ENCODE measurements at regions of chr6 and their contacts with region 1.

Region 1: GRCh38 chr6:130697995-130698535 is 129.1 kb upstream of the SMLR1 start:
- DNase-seq: peak in 1 of 2 experiments; percentile 68
- H3K4me3 ChIP-seq: no peak overlapping the region
- H3K27ac ChIP-seq: no peak overlapping the region
- H3K4me1 ChIP-seq: no peaks in the 10 kb centered on the region
- H3K27me3 ChIP-seq: no peaks in the 10 kb centered on the region
- CTCF ChIP-seq: peak; percentile 33 to 79 (median 64)
- EP300 ChIP-seq: no peak
- POLR2A ChIP-seq: no peak
- RAD21 ChIP-seq: peak; percentile 87 to 88

Region 2: DNA sequence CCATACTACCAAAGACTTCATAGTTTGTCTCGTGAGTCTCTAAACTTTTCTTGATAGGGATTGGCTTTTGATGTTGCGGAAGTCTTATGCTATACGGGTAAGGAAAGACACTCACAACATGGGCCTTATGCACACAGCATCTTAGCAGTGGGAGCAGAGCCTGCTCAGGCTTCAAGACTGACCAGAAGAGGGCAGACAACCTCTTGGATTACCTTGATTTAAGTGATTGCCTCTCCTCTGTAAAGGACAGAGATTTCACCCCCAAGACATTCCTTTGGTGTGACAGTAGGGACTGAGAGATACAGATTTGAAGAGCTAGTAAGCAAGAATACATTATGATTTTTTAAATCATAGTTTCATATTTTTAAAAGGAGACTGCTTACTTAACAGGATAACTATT is 404.3 kb before region 1 on chr6:
- CTCF ChIA-PET with region 1: interaction called, 11 read pairs
- POLR2A ChIA-PET with region 1: no interaction called
- DNase-seq: peak in 1 of 2 experiments; percentile 25
- H3K4me3 ChIP-seq: no peak overlapping the region
- H3K27ac ChIP-seq: no peak overlapping the region
- H3K4me1 ChIP-seq: no peaks in the 10 kb centered on the region
- H3K27me3 ChIP-seq: no peaks in the 10 kb centered on the region
- CTCF ChIP-seq: peak; percentile 49 to 88 (median 69)
- EP300 ChIP-seq: no peak
- POLR2A ChIP-seq: no peak
- RAD21 ChIP-seq: peak; percentile 70 to 79

Region 3: GRCh38 chr6:130322673-130323268 is 375.3 kb before region 1 on chr6:
- CTCF ChIA-PET with region 1: interaction called, 20 read pairs
- POLR2A ChIA-PET with region 1: no interaction called
- DNase-seq: no peak
- H3K4me3 ChIP-seq: no peak overlapping the region
- H3K27ac ChIP-seq: no peak overlapping the region
- H3K4me1 ChIP-seq: no peaks in the 10 kb centered on the region
- H3K27me3 ChIP-seq: no peaks in the 10 kb centered on the region
- CTCF ChIP-seq: peak in 2 of 3 experiments; percentile 70 to 82; a peak in 3 of 4 replicates
- EP300 ChIP-seq: no peak
- POLR2A ChIP-seq: no peak
- RAD21 ChIP-seq: peak; percentile 90 to 92

Region 4: DNA sequence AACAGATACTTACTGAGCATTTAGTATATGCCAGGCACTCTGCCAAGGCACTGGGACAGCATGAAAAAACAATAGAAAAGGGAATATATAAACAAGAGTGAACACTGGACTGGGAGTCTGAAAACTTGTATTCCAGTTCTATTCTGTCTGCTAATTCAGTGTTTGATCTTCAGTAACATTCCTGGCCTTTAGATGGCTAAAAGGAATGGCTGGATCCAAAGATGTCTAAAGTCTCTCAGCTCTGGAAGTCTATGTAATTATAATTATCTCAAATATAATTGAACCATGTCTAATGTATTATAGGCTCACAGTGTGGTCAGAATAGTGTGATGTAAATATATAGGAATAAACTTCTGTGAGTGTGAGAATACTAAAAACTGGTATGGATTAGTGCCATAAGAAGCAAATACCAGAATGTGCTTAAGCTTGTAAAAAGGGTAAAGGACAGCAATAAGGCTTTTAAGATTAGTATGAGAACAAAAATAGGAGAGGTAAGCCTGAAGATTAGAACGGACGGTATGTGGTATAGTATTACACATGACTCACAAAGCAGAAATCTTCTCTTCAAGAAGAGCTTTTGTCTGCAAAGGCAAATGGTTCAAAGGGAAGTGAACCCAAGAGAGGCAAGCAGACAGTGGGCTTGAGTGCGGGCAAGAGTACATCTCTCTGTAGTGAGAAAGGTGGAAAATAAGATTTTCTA is 263.7 kb before region 1 on chr6:
- CTCF ChIA-PET with region 1: no interaction called
- POLR2A ChIA-PET with region 1: no interaction called
- DNase-seq: no peak
- H3K4me3 ChIP-seq: no peak overlapping the region
- H3K27ac ChIP-seq: no peak overlapping the region
- H3K4me1 ChIP-seq: peaks cover 0 to 3% (median 0%) of the 10 kb centered on the region in 4 experiments; a peak in 1 of 7 replicates
- H3K27me3 ChIP-seq: no peaks in the 10 kb centered on the region
- CTCF ChIP-seq: no peak
- EP300 ChIP-seq: no peak
- POLR2A ChIP-seq: no peak
- RAD21 ChIP-seq: no peak

Region 5: GRCh38 chr6:130557481-130558112 is 140.5 kb before region 1 on chr6:
- CTCF ChIA-PET with region 1: no interaction called
- POLR2A ChIA-PET with region 1: no interaction called
- DNase-seq: no peak
- H3K4me3 ChIP-seq: no peak overlapping the region
- H3K27ac ChIP-seq: no peak overlapping the region
- H3K4me1 ChIP-seq: no peaks in the 10 kb centered on the region
- H3K27me3 ChIP-seq: no peaks in the 10 kb centered on the region
- CTCF ChIP-seq: no peak
- EP300 ChIP-seq: no peak
- POLR2A ChIP-seq: no peak
- RAD21 ChIP-seq: no peak

Region 6: DNA sequence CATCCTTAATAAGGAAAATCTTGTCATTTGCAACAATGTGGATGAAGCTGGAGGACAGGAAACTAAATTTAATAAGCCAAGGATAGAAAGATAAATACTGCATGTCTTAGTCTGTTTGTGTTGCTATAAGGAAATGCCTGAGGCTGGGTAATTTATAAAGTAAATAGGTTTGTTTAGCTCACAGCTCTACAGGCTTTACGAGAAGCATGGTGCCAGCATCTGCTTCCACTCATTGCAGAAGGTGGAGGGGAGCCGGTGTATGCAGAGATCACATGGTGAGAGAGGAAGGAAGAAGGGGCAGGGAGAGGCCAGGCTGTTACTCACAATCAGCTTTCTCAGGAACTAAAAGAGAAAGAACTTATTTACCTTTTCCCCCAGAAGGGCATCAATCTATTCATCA is 10.3 kb after region 1 on chr6:
- CTCF ChIA-PET with region 1: interaction called, 11 read pairs
- POLR2A ChIA-PET with region 1: no interaction called
- DNase-seq: no peak
- H3K4me3 ChIP-seq: no peak overlapping the region
- H3K27ac ChIP-seq: no peak overlapping the region
- H3K4me1 ChIP-seq: peaks cover 1 to 10% (median 7%) of the 10 kb centered on the region in 4 experiments; a peak in 4 of 7 replicates
- H3K27me3 ChIP-seq: no peaks in the 10 kb centered on the region
- CTCF ChIP-seq: no peak
- EP300 ChIP-seq: no peak
- POLR2A ChIP-seq: no peak
- RAD21 ChIP-seq: no peak

Region 7: DNA sequence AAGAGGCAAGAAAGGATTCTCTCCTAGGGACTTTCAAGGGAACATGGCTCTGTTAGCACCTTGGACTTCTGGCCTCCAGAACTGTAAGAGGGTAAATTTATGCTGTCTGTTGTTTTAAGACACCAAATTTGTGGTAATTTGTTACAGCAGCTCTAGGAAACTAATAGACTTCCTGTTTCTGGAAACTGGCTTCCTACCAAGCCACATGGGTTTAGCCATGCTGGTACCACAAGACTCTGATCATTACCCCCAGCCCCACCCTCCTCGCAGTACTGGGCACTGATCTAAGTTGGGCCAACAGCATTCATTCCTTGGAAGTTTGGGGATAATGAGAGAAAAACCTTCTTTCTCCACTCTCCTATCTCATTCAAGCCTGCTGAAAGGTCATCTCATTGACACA is 19.6 kb after region 1 on chr6:
- CTCF ChIA-PET with region 1: interaction called, 26 read pairs
- POLR2A ChIA-PET with region 1: no interaction called
- DNase-seq: no peak
- H3K4me3 ChIP-seq: no peak overlapping the region
- H3K27ac ChIP-seq: no peak overlapping the region
- H3K4me1 ChIP-seq: peaks cover 5 to 15% (median 8%) of the 10 kb centered on the region in 4 experiments; a peak in 6 of 7 replicates
- H3K27me3 ChIP-seq: no peaks in the 10 kb centered on the region
- CTCF ChIP-seq: no peak
- EP300 ChIP-seq: no peak
- POLR2A ChIP-seq: no peak
- RAD21 ChIP-seq: no peak

Measured in H1 (cell line).